Activated CD4-positive, alpha-beta memory T cell treated with anti-CD3 and anti-CD28 coated beads, Interleukin-2, amount 10 ng/mL, durations not matched to agents 7 days and 5 days (primary cell): ENCODE measurements at regions of chr22 and their contacts with region 1.

Region 1: GRCh38 chr22:24938741-24939341 is 7.7 kb downstream of the LHFPL7 start:
- DNase-seq: peak; percentile 35
- H3K4me3 Mint-ChIP-seq: no peak overlapping the region
- H3K27ac Mint-ChIP-seq: no peak overlapping the region
- H3K4me1 Mint-ChIP-seq: no peaks in the 10 kb centered on the region
- H3K27me3 Mint-ChIP-seq: peaks cover 12% of the 10 kb centered on the region

Region 2: DNA sequence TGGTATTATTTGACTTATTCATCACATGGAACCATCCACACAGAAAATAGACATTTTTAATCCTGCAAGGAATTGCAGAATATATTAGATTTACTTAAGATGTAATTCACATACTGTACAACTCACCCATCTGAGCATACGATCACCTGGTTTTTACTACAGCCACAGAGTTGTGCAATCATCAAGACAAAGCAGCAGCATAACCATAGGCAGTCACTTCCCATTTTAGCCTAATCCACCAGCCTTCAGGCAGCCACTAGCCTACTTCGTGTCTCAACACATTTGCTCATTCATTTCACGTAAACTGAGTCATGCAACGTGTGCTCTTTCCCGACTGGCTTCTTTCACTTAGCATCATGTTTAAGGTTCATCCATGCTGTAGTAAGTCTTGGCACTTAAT is 187.3 kb before region 1 on chr22:
- CTCF ChIA-PET with region 1: no interaction called
- POLR2A ChIA-PET with region 1: no interaction called
- DNase-seq: no peak
- H3K4me3 Mint-ChIP-seq: no peak overlapping the region
- H3K27ac Mint-ChIP-seq: no peak overlapping the region
- H3K4me1 Mint-ChIP-seq: no peaks in the 10 kb centered on the region
- H3K27me3 Mint-ChIP-seq: peaks cover 56% of the 10 kb centered on the region

Region 3: GRCh38 chr22:24894220-24894975 is 44.4 kb before region 1 on chr22:
- CTCF ChIA-PET with region 1: no interaction called
- POLR2A ChIA-PET with region 1: no interaction called
- DNase-seq: no peak
- H3K4me3 Mint-ChIP-seq: no peak overlapping the region
- H3K27ac Mint-ChIP-seq: no peak overlapping the region
- H3K4me1 Mint-ChIP-seq: no peaks in the 10 kb centered on the region
- H3K27me3 Mint-ChIP-seq: no peaks in the 10 kb centered on the region

Region 4: GRCh38 chr22:24905909-24906308 is 32.9 kb before region 1 on chr22:
- CTCF ChIA-PET with region 1: no interaction called
- POLR2A ChIA-PET with region 1: no interaction called
- DNase-seq: no peak
- H3K4me3 Mint-ChIP-seq: no peak overlapping the region
- H3K27ac Mint-ChIP-seq: no peak overlapping the region
- H3K4me1 Mint-ChIP-seq: no peaks in the 10 kb centered on the region
- H3K27me3 Mint-ChIP-seq: no peaks in the 10 kb centered on the region

Region 5: GRCh38 chr22:24951942-24952836 is 13.3 kb after region 1 on chr22 and contains the start of gene KIAA1671:
- CTCF ChIA-PET with region 1: interaction called, 21 read pairs
- POLR2A ChIA-PET with region 1: no interaction called
- DNase-seq: peak; percentile 92
- H3K4me3 Mint-ChIP-seq: peak within 1 kb of the TSS; percentile 90
- H3K27ac Mint-ChIP-seq: peak within 1 kb of the TSS; percentile 75
- H3K4me1 Mint-ChIP-seq: peaks cover 57% of the 10 kb centered on the region
- H3K27me3 Mint-ChIP-seq: peaks cover 68% of the 10 kb centered on the region
- total RNA-seq, gene KIAA1671: 35.0 to 35.5 TPM

Region 6: DNA sequence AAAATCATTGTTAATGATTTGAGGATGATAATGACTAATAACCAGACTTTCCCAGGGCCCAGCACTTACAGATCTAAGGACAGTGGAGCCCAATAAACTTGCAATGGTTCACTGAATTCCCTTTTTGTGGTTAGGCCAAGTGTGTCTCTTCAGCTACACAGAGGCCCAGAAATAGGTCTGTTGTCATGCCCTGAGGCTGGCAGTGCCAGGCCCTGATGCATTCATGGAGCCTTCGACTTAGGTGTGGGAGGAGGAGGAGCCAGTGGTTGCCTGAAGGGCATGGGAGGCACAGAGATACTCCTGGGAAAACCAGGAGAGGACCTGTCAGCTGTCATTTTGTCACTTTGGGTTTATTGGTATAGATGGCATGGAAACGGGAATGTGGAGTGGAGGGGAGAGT is 69.9 kb after region 1 on chr22:
- CTCF ChIA-PET with region 1: no interaction called
- POLR2A ChIA-PET with region 1: no interaction called
- DNase-seq: no peak
- H3K4me3 Mint-ChIP-seq: no peak overlapping the region
- H3K27ac Mint-ChIP-seq: no peak overlapping the region
- H3K4me1 Mint-ChIP-seq: peaks cover 34% of the 10 kb centered on the region
- H3K27me3 Mint-ChIP-seq: peaks cover 5% of the 10 kb centered on the region